ENCODE measurements at regions of chr12 and their contacts with region 1.

Region 1: GRCh38 chr12:4567073-4567881 is 5.3 kb downstream of the DYRK4 start:
- DNase-seq: no peak
- ATAC-seq: peak; percentile 75
- H3K4me3 Mint-ChIP-seq: peak overlapping the region; percentile 59
- H3K27ac Mint-ChIP-seq: peak overlapping the region; percentile 88
- H3K4me1 Mint-ChIP-seq: peaks cover 66% of the 10 kb centered on the region
- H3K27me3 Mint-ChIP-seq: no peaks in the 10 kb centered on the region
- CTCF ChIP-seq: no peak

Region 2: DNA sequence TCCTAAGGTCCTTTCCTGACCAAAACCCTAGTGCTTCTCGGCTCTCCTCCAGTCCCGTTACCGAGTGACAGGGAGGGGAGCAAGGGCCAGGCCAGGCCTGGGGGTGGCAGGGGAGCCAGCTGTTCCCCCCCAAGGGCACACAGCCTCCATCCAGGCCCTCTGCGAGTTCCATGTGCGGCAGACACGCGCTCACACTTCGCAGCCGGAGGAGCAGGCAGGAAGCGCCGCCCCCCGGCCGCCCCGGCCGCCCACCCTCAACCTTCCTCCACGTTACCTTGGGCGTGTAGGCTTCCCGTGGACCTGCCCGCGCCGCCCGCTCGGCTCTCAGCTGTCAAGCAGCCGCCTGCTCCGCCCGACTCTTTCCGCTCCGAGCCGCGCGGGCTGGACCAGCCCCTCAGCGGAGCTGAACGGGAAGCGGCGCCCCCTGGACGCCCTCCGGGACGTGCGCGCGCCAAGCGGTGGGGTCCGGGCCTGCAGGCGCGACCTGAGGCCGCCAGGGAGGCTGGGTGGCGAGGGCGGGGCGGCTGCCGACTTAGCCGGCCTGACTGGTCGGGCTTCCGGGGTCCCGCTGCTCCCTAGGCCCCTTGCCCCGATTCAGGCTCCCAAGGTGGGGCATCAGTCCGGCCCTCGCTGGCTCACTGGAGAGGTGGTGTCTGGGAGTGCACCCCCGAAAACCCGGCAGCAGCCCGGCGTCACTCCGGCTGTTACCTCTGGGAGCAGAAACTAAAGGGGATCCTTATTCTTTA is 814.4 kb before region 1 on chr12 and contains the start of gene CRACR2A:
- CTCF ChIA-PET with region 1: no interaction called
- POLR2A ChIA-PET with region 1: interaction called, 3 read pairs
- intact Hi-C with region 1: loop called (anchors 2 kb)
- DNase-seq: peak; percentile 85
- ATAC-seq: peak; percentile 87
- H3K4me3 Mint-ChIP-seq: peak within 1 kb of the TSS; percentile 88
- H3K27ac Mint-ChIP-seq: peak within 1 kb of the TSS; percentile 93
- H3K4me1 Mint-ChIP-seq: peaks cover 25% of the 10 kb centered on the region
- H3K27me3 Mint-ChIP-seq: no peaks in the 10 kb centered on the region
- CTCF ChIP-seq: no peak
- total RNA-seq, gene CRACR2A: 22.7 and 25.8 TPM in 2 replicates

Region 3: GRCh38 chr12:4320853-4321701 is 246.2 kb before region 1 on chr12 and contains the start of gene TIGAR:
- CTCF ChIA-PET with region 1: interaction called, 4 read pairs
- POLR2A ChIA-PET with region 1: no interaction called
- intact Hi-C with region 1: loop called (anchors 2 kb)
- DNase-seq: peak; percentile 94
- ATAC-seq: peak; percentile 97
- H3K4me3 Mint-ChIP-seq: peak within 1 kb of the TSS; percentile 95
- H3K27ac Mint-ChIP-seq: peak within 1 kb of the TSS; percentile 92
- H3K4me1 Mint-ChIP-seq: peaks cover 34% of the 10 kb centered on the region
- H3K27me3 Mint-ChIP-seq: no peaks in the 10 kb centered on the region
- CTCF ChIP-seq: no peak
- total RNA-seq, gene TIGAR: 10.0 and 10.2 TPM in 2 replicates

Region 4: DNA sequence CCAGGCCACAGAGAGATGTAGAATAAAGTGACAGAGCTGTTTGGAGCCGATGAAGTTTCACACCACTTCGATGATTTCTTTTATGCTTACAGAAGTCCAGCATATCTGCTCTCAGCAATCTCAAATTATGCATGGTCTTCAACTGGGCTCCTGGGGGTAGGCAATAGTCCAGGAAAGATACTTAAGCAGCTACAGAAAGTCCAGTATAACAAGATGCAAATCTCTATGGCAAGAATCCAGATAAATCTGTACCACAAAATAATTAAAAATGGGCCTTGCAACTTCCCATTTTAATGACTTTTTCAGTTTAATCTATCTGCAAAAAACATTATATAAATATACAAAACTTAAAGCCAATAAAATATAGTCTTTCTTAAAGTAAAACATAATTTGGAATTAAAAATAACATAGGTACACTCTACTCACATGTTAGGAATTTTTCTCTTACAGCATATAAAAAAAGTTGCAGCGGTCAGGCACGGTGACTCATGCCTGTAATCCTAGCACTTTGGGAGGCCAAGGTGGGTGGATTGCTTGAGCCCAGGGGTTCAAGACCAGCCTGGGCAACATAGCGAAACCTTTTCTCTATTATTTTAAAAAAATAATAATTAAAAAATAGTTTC is 49.1 kb before region 1 on chr12:
- CTCF ChIA-PET with region 1: no interaction called
- POLR2A ChIA-PET with region 1: no interaction called
- intact Hi-C with region 1: no loop called
- DNase-seq: no peak
- ATAC-seq: no peak
- H3K4me3 Mint-ChIP-seq: no peak overlapping the region
- H3K27ac Mint-ChIP-seq: no peak overlapping the region
- H3K4me1 Mint-ChIP-seq: no peaks in the 10 kb centered on the region
- H3K27me3 Mint-ChIP-seq: no peaks in the 10 kb centered on the region
- CTCF ChIP-seq: no peak

Region 5: GRCh38 chr12:4538207-4539160 is 28.8 kb before region 1 on chr12 and contains the start of gene RAD51AP1:
- CTCF ChIA-PET with region 1: no interaction called
- POLR2A ChIA-PET with region 1: interaction called, 5 read pairs
- intact Hi-C with region 1: loop called (anchors 1 kb)
- DNase-seq: peak; percentile 86
- ATAC-seq: peak; percentile 98
- H3K4me3 Mint-ChIP-seq: peak within 1 kb of the TSS; percentile 91
- H3K27ac Mint-ChIP-seq: peak within 1 kb of the TSS; percentile 99
- H3K4me1 Mint-ChIP-seq: peaks cover 31% of the 10 kb centered on the region
- H3K27me3 Mint-ChIP-seq: no peaks in the 10 kb centered on the region
- CTCF ChIP-seq: no peak
- total RNA-seq, gene RAD51AP1: 5.6 and 5.9 TPM in 2 replicates

Region 6: GRCh38 chr12:4604684-4605193 is 37.5 kb after region 1 on chr12:
- CTCF ChIA-PET with region 1: interaction called, 3 read pairs
- POLR2A ChIA-PET with region 1: interaction called, 4 read pairs
- intact Hi-C with region 1: loop called (anchors 1 kb)
- DNase-seq: peak; percentile 66
- ATAC-seq: peak; percentile 97
- H3K4me3 Mint-ChIP-seq: peak overlapping the region; percentile 98
- H3K27ac Mint-ChIP-seq: peak overlapping the region; percentile 91
- H3K4me1 Mint-ChIP-seq: peaks cover 19% of the 10 kb centered on the region
- H3K27me3 Mint-ChIP-seq: no peaks in the 10 kb centered on the region
- CTCF ChIP-seq: peak; percentile 84

Region 7: GRCh38 chr12:4648501-4649357 is 81.5 kb after region 1 on chr12 and contains the starts of genes AKAP3 and NDUFA9:
- CTCF ChIA-PET with region 1: no interaction called
- POLR2A ChIA-PET with region 1: interaction called, 6 read pairs
- intact Hi-C with region 1: loop called (anchors 1 kb)
- DNase-seq: peak; percentile 67
- ATAC-seq: peak; percentile 94
- H3K4me3 Mint-ChIP-seq: peak within 1 kb of the TSS; percentile 89
- H3K27ac Mint-ChIP-seq: peak within 1 kb of the TSS; percentile 88
- H3K4me1 Mint-ChIP-seq: peaks cover 49% of the 10 kb centered on the region
- H3K27me3 Mint-ChIP-seq: no peaks in the 10 kb centered on the region
- CTCF ChIP-seq: no peak
- total RNA-seq, gene AKAP3: 3.4 and 3.7 TPM in 2 replicates
- total RNA-seq, gene NDUFA9: 108 and 125 TPM in 2 replicates

Region 8: GRCh38 chr12:4829161-4829792 is 262.0 kb after region 1 on chr12:
- CTCF ChIA-PET with region 1: no interaction called
- POLR2A ChIA-PET with region 1: interaction called, 4 read pairs
- intact Hi-C with region 1: loop called (anchors 5 kb)
- DNase-seq: no peak
- ATAC-seq: peak; percentile 87
- H3K4me3 Mint-ChIP-seq: peak overlapping the region; percentile 76
- H3K27ac Mint-ChIP-seq: peak overlapping the region; percentile 93
- H3K4me1 Mint-ChIP-seq: peaks cover 87% of the 10 kb centered on the region
- H3K27me3 Mint-ChIP-seq: no peaks in the 10 kb centered on the region
- CTCF ChIP-seq: no peak